Mammary epithelial cell (primary cell): ENCODE measurements at regions of chr22 and their contacts with region 1.

Region 1: DNA sequence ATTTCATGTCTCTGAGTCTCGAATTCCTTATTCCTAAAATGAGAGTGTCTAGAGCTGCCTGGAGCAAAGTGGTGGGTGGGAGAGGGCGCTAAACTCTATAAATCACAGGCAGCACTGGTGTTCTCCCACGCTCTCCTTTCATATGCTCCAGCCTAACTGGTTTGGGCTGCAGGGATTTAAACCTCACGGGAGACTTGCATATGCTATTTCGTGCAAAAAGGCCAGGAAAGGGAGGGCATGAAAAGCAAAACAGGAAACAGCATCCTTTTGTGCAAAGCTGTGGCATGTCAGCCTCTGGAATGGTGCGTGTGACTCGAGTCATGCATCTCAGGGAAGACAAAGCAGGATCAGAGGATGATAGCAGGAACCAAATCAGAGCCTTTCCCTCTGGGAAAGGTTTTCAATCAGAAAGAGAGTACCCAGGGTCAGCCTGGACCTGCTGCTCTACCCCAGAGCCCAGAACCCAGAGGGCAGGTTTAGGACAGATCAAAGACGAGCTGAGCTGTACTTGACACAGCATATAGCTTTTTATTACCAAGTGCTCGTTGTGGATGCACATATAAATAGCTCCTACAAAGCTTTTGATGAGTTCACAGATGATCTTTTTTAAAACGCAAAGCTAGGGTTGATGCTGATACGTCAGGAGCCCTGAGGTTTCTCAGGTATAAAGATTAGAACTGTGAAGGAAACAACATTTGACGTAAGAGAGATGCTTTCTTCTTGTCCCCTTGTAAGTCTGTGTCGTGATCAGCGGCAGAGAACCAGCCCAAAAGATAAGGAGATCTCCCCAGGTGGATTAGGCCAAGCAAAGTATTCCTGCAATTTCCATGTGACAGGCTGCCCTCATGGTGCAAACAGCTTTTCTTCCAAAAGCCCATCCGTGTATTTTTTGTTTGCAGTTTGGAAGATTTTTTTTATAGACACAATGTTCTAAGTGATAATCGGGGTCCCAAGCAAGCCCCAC is 46.2 kb upstream of the YWHAH start:
- DNase-seq: no peak
- H3K4me3 ChIP-seq: no peak overlapping the region
- H3K27ac ChIP-seq: no peak overlapping the region
- H3K4me1 ChIP-seq: no peaks in the 10 kb centered on the region
- H3K27me3 ChIP-seq: no peaks in the 10 kb centered on the region
- CTCF ChIP-seq: no peak

Region 2: GRCh38 chr22:31773416-31773815 is 124.7 kb before region 1 on chr22:
- CTCF ChIA-PET with region 1: no interaction called
- dilution Hi-C with region 1: loop called (anchors 5 kb)
- in situ Hi-C with region 1: no loop called
- intact Hi-C with region 1: no loop called
- DNase-seq: no peak
- H3K4me3 ChIP-seq: no peak overlapping the region
- H3K27ac ChIP-seq: no peak overlapping the region
- H3K4me1 ChIP-seq: no peaks in the 10 kb centered on the region
- H3K27me3 ChIP-seq: no peaks in the 10 kb centered on the region
- CTCF ChIP-seq: no peak

Region 3: DNA sequence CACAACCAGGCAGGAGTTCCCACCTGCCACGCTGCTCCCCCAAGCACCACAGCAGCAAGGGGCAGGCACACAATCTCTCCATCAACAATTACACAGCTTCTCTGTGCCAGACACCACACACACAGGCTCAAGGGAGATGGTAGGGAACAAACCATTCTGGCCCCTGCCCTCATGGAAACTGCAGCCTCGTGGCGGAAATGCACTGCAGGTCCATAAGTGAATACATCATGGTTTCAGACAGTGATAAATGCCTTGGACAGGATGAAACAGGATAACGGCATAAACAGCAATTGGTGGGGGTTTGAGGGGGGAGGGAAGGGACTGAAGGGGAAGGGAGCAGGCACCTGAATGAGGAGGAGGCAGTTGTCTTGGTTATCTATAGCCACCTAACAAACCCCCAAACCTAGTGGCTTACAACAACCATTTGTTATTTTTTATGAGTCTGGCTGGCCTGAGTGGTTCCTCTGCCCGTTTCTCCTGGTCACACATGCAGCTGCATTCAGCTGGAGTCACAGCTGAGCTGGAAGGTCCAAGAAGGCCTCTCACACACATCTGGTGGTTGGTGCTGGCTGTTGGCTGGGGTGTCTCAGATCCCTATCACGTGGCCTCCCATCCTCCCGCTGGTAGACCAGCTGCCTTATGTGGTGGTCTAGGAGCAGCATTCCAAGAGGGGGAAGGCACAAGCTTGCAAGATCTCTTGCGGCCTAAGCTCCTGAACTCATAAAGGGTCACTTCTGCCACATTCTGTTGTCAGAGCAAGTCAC is 31.2 kb after region 1 on chr22:
- CTCF ChIA-PET with region 1: no interaction called
- dilution Hi-C with region 1: no loop called
- in situ Hi-C with region 1: no loop called
- intact Hi-C with region 1: no loop called
- DNase-seq: no peak
- H3K4me3 ChIP-seq: no peak overlapping the region
- H3K27ac ChIP-seq: no peak overlapping the region
- H3K4me1 ChIP-seq: no peaks in the 10 kb centered on the region
- H3K27me3 ChIP-seq: no peaks in the 10 kb centered on the region
- CTCF ChIP-seq: no peak

Region 4: GRCh38 chr22:32063701-32064100 is 165.6 kb after region 1 on chr22:
- CTCF ChIA-PET with region 1: no interaction called
- dilution Hi-C with region 1: no loop called
- in situ Hi-C with region 1: no loop called
- intact Hi-C with region 1: no loop called
- DNase-seq: no peak
- H3K4me3 ChIP-seq: no peak overlapping the region
- H3K27ac ChIP-seq: no peak overlapping the region
- H3K4me1 ChIP-seq: no peaks in the 10 kb centered on the region
- H3K27me3 ChIP-seq: no peaks in the 10 kb centered on the region
- CTCF ChIP-seq: no peak